GM10248 (cell line): ENCODE measurements at regions of chr12 and their contacts with region 1.

Region 1: DNA sequence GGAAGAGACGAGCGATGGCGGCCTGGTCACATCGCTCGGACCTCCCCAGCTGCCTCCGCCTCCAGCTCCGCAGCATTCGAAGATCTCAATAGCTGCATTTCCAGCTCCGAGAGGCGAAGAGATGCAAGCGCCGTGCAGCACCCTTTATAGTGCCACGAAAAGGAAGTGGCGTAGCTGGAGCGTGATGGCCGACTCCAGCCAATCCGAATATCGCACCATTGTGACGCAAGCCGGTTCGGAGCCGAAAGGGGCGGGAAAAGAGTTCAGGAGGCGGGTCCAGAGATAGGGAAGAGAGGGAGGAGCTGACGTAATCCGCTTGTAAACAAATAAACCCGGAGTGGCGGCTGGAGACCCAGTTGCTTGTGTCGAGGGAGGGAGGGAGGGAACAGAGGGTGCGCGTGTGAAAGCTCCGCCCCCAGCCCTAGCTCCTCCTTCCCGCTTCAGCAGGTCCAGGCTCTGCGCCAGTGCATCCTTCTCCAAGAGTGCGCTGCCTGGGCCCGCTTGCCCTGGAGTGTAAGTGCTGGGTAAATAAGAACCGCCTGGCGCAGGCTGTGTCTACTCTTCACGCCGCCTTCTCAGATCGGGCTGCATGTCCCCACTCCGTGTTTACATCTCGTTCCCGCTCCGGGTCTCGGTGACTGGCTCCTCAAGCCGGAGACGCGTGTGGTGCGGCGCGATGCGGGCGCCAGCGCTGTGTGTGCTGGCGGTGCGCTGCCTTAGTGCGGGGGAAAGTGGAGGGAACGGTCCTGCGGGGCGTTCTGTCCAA is at the start of gene BTG1:
- DNase-seq: peak; percentile 93
- CTCF ChIP-seq: peak; percentile 18

Region 2: GRCh38 chr12:92034858-92035401 is 111.0 kb before region 1 on chr12:
- CTCF ChIA-PET with region 1: interaction called, 4 read pairs
- POLR2A ChIA-PET with region 1: interaction called, 16 read pairs
- DNase-seq: peak; percentile 30
- CTCF ChIP-seq: no peak

Region 3: GRCh38 chr12:92085040-92085735 is 60.7 kb before region 1 on chr12:
- CTCF ChIA-PET with region 1: no interaction called
- POLR2A ChIA-PET with region 1: no interaction called
- DNase-seq: no peak
- CTCF ChIP-seq: no peak

Region 4: GRCh38 chr12:92170050-92170449 is 24.1 kb after region 1 on chr12:
- CTCF ChIA-PET with region 1: interaction called, 6 read pairs
- POLR2A ChIA-PET with region 1: interaction called, 61 read pairs
- DNase-seq: no peak
- CTCF ChIP-seq: no peak

Region 5: GRCh38 chr12:92363295-92364146 is 217.6 kb after region 1 on chr12:
- CTCF ChIA-PET with region 1: interaction called, 4 read pairs
- POLR2A ChIA-PET with region 1: interaction called, 49 read pairs
- DNase-seq: peak; percentile 61
- CTCF ChIP-seq: no peak

Region 6: GRCh38 chr12:92493816-92494215 is 347.9 kb after region 1 on chr12:
- CTCF ChIA-PET with region 1: interaction called, 6 read pairs
- POLR2A ChIA-PET with region 1: interaction called, 12 read pairs
- DNase-seq: peak; percentile 28
- CTCF ChIP-seq: no peak

Region 7: GRCh38 chr12:92551853-92552397 is 406.0 kb after region 1 on chr12:
- CTCF ChIA-PET with region 1: no interaction called
- POLR2A ChIA-PET with region 1: interaction called, 12 read pairs
- DNase-seq: peak; percentile 71
- CTCF ChIP-seq: no peak

Region 8: DNA sequence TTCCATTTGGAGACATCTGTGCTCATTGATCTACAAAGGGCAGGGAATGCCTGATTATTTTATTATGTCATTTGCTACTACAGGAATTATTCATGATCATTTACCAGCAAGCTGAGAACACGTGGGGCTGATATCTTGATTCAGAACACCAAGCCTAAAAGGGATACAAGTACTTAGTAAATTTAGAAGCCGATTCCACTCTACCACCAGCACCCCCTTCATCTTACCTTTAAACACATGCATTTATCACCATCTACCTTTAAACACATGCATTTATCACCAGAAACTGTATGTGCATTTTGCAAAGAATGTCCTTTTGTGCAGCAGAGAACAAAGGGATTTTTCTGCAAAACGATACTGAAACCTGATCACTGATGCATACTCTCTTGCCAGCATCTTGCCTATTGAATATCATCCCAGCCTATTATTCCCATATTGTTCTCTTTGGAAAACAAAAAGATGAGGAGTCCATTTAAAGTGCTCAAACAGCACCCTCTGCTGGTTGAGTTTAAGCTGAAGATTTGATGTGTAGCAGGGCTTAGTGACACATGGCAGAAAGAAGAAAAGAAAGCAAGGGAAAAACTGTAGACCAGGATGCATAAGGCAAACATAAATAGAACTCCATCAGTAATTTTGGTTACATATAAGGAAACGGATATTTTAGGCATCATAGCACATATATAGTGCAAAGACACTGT is 424.3 kb after region 1 on chr12:
- CTCF ChIA-PET with region 1: interaction called, 4 read pairs
- POLR2A ChIA-PET with region 1: interaction called, 23 read pairs
- DNase-seq: peak; percentile 47
- CTCF ChIP-seq: peak; percentile 73